A549 (cell line): ENCODE measurements at regions of chr5 and their contacts with region 1.

Region 1: DNA sequence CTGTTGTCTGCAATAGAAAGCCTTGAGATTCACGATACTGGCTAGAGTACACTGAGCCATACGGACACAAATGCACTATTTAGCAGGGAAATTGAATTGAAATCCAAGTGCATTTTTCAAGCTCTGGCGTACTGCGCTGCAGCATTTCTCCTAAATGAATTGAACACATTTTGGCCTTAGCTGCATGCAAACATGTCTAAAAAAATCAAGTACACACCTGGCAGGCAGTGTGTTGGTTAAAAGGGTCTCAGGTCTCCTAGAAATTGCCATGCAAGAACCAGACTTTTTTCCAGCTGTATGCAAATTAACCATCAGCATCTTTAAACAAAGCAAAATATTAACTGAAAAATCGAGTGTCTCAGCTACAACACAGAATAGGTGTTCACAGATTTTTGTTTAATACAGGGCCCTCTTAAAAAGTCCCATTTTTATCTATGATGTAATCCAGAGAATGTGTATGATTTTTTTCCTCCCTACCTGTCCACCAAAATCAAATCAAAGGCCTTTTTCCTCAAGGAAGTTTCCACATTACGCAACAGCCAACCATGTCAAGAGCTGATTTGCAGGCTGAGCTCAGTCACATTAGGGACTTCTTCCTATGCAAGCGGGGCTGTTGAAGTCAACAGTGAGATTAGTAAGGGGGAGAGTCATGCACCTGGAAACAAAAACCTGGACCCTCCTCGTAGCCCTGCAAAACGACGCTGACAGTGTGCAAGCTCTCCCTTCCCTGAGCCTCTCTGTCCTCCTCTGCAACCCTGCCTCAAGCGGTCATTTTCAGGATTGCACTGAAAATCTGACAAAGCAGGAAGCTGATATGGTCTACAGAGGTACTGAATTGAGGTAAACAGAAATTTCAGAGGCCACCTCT is 14.1 kb upstream of the SFXN1 start:
- DNase-seq: peak; percentile 67
- ATAC-seq: peak; percentile 97 to 98
- H3K4me3 ChIP-seq: no peak overlapping the region
- H3K27ac ChIP-seq: peak overlapping the region in 1 of 2 experiments; percentile 56; a peak in 2 of 6 replicates
- H3K4me1 ChIP-seq: peaks cover 9% of the 10 kb centered on the region; the same call in 2 of the 3 replicates
- CTCF ChIP-seq: peak; percentile 53
- EP300 ChIP-seq: no peak
- POLR2A ChIP-seq: no peak
- RAD21 ChIP-seq: peak; percentile 30 to 55; a peak in 3 of 5 replicates

Region 2: DNA sequence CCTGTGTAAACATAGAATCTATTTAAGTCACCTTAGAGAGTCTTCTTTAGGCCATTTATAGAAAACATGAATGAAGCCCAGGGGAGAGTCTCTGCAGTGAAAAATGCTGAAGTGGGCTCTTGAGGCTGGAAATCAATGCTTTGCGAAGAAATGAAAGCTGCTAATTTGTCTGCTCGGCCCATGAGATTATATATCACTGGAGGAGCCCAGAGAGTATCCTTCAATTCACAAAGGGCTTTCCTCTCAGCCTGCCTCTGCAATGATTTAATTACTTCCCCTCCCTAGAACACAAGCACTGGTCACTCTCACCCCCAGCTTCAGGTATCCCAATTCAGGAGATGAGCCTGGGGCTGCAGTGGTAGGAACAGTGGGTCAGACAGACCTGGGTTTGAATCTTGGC is 12.1 kb before region 1 on chr5:
- CTCF ChIA-PET with region 1: interaction called, 11 read pairs
- POLR2A ChIA-PET with region 1: no interaction called
- DNase-seq: no peak
- ATAC-seq: no peak
- H3K4me3 ChIP-seq: no peak overlapping the region
- H3K27ac ChIP-seq: no peak overlapping the region
- H3K4me1 ChIP-seq: no peaks in the 10 kb centered on the region
- CTCF ChIP-seq: no peak
- EP300 ChIP-seq: no peak
- POLR2A ChIP-seq: no peak
- RAD21 ChIP-seq: no peak

Region 3: GRCh38 chr5:175478384-175479124 is 14.2 kb after region 1 on chr5 and contains the start of gene SFXN1:
- CTCF ChIA-PET with region 1: interaction called, 29 read pairs
- POLR2A ChIA-PET with region 1: interaction called, 11 read pairs
- DNase-seq: peak; percentile 78 to 91
- ATAC-seq: peak; percentile 92
- H3K4me3 ChIP-seq: peak within 1 kb of the TSS; percentile 80
- H3K27ac ChIP-seq: peak within 1 kb of the TSS; percentile 83 to 98
- H3K4me1 ChIP-seq: peaks cover 23% of the 10 kb centered on the region; the same call in 2 of the 3 replicates
- CTCF ChIP-seq: no peak
- EP300 ChIP-seq: no peak
- POLR2A ChIP-seq: peak; percentile 71
- RAD21 ChIP-seq: no peak
- polyA plus RNA-seq, gene SFXN1: 190 and 199 TPM in 2 replicates

Region 4: DNA sequence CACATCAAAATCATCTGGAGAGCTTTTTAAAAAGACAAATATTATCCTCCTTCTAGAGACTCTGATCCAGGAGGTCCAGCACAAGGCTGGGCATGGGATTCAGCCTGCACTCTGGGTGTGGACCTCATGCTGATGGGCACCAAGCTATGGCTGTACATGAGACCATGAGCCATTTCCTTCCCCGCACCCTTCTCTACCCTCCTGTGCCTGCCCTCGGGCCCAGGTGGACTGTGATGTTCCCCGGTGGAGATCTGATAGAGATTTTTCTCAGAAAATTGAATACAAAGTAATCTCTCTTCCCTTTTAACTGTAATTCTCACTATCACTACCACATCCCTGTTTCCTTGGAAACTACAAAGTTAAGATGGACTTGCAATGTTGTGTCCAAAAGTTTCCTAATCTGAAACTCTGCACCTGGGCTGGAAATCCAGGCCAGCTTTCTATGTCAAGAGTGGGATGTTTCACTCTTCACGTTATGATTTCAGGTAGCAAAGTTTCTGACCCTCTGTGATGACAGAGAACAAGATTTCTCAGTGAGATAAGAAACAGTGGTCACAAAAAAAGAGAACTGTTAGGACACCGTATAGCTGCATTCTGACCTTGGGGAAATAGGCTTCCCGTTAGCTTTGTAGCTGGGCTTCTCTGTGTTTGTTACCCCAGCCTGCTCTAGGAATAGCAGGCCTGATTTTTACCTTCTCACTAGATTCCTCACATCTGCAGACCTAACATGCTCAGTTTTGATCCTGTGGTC is 25.6 kb after region 1 on chr5:
- CTCF ChIA-PET with region 1: interaction called, 11 read pairs
- POLR2A ChIA-PET with region 1: no interaction called
- DNase-seq: no peak
- ATAC-seq: no peak
- H3K4me3 ChIP-seq: no peak overlapping the region
- H3K27ac ChIP-seq: no peak overlapping the region
- H3K4me1 ChIP-seq: peaks cover 22% of the 10 kb centered on the region
- CTCF ChIP-seq: no peak
- EP300 ChIP-seq: no peak
- POLR2A ChIP-seq: no peak
- RAD21 ChIP-seq: no peak

Region 5: DNA sequence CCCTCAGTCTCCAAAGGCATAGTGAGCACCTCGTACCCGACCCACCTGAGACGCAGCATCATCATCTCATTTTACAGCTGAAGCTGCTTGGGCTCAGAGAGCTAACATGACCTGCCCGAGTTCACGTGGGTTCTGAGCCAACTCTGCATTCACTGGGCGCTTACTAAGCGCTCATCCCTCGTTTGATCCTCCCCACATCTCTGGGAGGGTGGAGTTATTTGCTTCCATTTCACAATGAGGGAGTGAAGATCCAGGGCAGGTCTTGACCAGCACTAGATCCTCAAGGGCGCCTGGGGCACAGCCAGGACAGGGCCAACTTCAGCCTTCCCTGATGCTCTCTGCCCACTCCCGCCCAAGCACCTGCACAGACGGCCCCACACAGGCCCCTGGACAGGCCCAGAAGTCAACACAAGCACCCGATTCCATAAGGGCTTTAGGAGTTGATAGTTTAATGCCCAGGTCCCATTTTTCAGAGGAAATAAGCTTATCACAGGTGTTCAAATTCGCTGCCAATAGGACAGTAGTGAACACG is 274.4 kb after region 1 on chr5:
- CTCF ChIA-PET with region 1: no interaction called
- POLR2A ChIA-PET with region 1: no interaction called
- DNase-seq: no peak
- ATAC-seq: 0 out of 6 replicates have a peak, but pooled peaks of 1 of the 2 experiments have one; percentile 47
- H3K4me3 ChIP-seq: no peak overlapping the region
- H3K27ac ChIP-seq: peak overlapping the region in 1 of 2 experiments; percentile 60; a peak in 3 of 6 replicates
- H3K4me1 ChIP-seq: peaks cover 28% of the 10 kb centered on the region
- CTCF ChIP-seq: no peak
- EP300 ChIP-seq: no peak
- POLR2A ChIP-seq: no peak
- RAD21 ChIP-seq: no peak